A549 (cell line): ENCODE measurements at regions of chr17 and their contacts with region 1.

Region 1: GRCh38 chr17:8409966-8410864 is 12.6 kb upstream of the RNF222 start:
- DNase-seq: peak; percentile 79 to 91
- ATAC-seq: peak; percentile 91 to 97
- H3K4me3 ChIP-seq: no peak overlapping the region
- H3K27ac ChIP-seq: no peak overlapping the region
- H3K4me1 ChIP-seq: peaks cover 6% of the 10 kb centered on the region; the same call in 2 of the 3 replicates
- CTCF ChIP-seq: peak; percentile 96
- EP300 ChIP-seq: no peak
- POLR2A ChIP-seq: no peak
- RAD21 ChIP-seq: peak; percentile 90

Region 2: DNA sequence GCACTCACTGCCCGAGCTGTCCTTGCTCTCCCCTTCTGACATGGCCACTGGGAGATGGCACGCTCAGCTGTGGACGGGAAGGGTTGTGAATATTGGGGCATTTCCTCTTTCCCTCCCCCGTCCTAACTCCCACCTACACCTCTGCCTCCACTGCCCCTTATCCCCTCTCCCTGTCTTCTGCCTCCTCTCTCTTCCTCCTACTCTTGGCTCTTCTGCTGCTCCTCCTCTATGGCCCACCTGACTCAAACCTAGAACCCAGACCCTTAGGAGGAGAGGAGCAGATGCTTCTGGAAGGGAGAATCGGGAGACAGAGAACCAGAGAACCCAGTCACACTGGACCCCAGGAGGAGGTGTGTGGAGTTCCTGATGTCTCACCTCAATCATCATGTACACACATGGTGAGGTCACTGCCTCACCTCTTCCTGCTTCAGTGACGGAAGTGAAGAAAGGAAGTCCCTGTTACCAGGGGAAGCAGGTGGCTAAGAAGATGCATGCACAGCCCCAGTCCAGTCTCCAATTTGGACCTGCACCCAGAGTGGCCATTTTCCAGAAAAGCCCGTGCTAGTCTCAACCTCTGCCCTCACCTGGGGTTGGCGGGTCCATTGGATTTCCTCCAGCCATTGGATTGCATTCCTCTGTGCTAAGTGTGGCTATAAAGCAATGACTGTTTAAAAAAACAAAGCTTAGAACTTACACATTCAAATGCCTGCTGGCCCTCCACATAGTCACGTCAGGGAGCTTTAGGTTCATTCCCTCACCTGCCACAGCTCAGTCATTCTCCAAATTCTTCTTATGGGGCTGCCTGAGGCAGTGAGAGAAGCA is 16.6 kb before region 1 on chr17:
- CTCF ChIA-PET with region 1: interaction called, 40 read pairs
- POLR2A ChIA-PET with region 1: no interaction called
- DNase-seq: no peak
- ATAC-seq: peak in 1 of 2 experiments; percentile 14; a peak in 2 of 6 replicates
- H3K4me3 ChIP-seq: no peak overlapping the region
- H3K27ac ChIP-seq: no peak overlapping the region
- H3K4me1 ChIP-seq: peaks cover 6% of the 10 kb centered on the region; the same call in 1 of the 3 replicates
- CTCF ChIP-seq: no peak
- EP300 ChIP-seq: no peak
- POLR2A ChIP-seq: no peak
- RAD21 ChIP-seq: no peak

Region 3: GRCh38 chr17:8426094-8426720 is 16.0 kb after region 1 on chr17:
- CTCF ChIA-PET with region 1: interaction called, 40 read pairs
- POLR2A ChIA-PET with region 1: no interaction called
- DNase-seq: no peak
- ATAC-seq: no peak
- H3K4me3 ChIP-seq: no peak overlapping the region
- H3K27ac ChIP-seq: no peak overlapping the region
- H3K4me1 ChIP-seq: peaks cover 7% of the 10 kb centered on the region; the same call in 2 of the 3 replicates
- CTCF ChIP-seq: no peak
- EP300 ChIP-seq: no peak
- POLR2A ChIP-seq: no peak
- RAD21 ChIP-seq: no peak

Region 4: DNA sequence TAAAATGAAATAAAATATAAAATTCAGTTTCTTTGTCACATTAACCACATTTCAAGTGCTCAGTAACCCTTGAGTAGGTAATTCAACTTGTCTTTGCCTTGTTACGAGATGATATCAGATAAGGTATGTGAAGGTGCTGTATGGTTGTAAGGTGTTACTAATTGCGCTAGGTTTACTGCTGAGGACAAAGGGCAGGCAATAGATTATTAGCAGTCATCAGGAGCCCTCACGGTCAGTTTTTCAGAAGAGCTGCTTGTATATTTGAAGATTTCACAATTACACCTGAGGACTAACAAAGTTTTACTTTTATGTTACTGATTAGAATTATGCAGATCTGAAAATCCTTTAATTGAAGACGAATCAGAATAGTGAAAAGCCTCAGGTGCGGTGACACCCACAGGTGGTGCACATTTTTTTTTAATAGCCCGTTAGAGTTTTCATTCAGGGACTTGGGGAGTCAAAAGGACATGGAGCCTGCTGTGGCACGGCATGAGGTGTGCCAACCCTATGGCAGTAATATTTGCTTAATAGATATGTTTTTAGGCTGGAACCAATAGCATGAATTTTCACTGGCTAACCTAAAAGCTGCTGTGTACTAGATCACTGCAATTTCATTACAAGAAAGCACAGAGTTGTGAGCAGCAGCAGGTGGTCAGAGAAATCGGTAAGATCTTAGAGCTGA is 41.9 kb after region 1 on chr17:
- CTCF ChIA-PET with region 1: interaction called, 13 read pairs
- POLR2A ChIA-PET with region 1: no interaction called
- DNase-seq: no peak
- ATAC-seq: no peak
- H3K4me3 ChIP-seq: no peak overlapping the region
- H3K27ac ChIP-seq: no peak overlapping the region
- H3K4me1 ChIP-seq: no peaks in the 10 kb centered on the region
- CTCF ChIP-seq: no peak
- EP300 ChIP-seq: no peak
- POLR2A ChIP-seq: no peak
- RAD21 ChIP-seq: no peak

Region 5: DNA sequence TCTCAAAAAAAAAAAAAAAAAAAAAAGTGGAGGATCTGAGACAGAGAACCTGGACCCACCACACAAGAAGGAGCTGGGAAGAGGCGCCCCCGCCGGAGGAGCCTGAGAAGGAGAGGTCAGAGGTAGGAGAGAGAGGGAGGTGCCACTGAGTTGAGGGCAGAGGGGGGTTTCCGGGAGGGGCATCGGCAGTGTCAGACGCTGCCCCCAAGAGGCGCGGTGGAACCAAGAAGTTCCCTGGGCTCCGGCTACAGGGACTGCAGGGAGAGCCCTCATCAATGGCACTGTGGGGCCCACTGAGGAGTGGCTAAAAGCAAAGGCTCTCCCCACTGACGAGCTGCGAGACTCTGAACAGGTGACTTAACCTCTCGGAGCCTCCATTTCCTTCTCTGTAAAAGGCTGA is 330.3 kb after region 1 on chr17:
- CTCF ChIA-PET with region 1: interaction called, 112 read pairs
- POLR2A ChIA-PET with region 1: no interaction called
- DNase-seq: no peak
- ATAC-seq: no peak
- H3K4me3 ChIP-seq: no peak overlapping the region
- H3K27ac ChIP-seq: no peak overlapping the region
- H3K4me1 ChIP-seq: no peaks in the 10 kb centered on the region; the same call in 2 of the 3 replicates
- CTCF ChIP-seq: no peak
- EP300 ChIP-seq: no peak
- POLR2A ChIP-seq: no peak
- RAD21 ChIP-seq: no peak

Region 6: GRCh38 chr17:8785547-8786413 is 375.6 kb after region 1 on chr17:
- CTCF ChIA-PET with region 1: interaction called, 22 read pairs
- POLR2A ChIA-PET with region 1: no interaction called
- DNase-seq: peak; percentile 69 to 72
- ATAC-seq: peak; percentile 87 to 98
- H3K4me3 ChIP-seq: no peak overlapping the region
- H3K27ac ChIP-seq: no peak overlapping the region
- H3K4me1 ChIP-seq: no peaks in the 10 kb centered on the region
- CTCF ChIP-seq: peak; percentile 85
- EP300 ChIP-seq: no peak
- POLR2A ChIP-seq: no peak
- RAD21 ChIP-seq: peak; percentile 88 to 91